PC-9 (cell line): ENCODE measurements at regions of chr5 and their contacts with region 1.

Region 1: GRCh38 chr5:71658916-71659662 is 60.0 kb upstream of the CARTPT start:
- DNase-seq: no peak
- H3K4me3 ChIP-seq: no peak overlapping the region
- H3K27ac ChIP-seq: no peak overlapping the region
- H3K4me1 ChIP-seq: peaks cover 15% of the 10 kb centered on the region; the same call in 1 of the 2 replicates
- H3K27me3 ChIP-seq: no peaks in the 10 kb centered on the region
- CTCF ChIP-seq: peak; percentile 50

Region 2: GRCh38 chr5:71586941-71587765 is 71.9 kb before region 1 on chr5 and contains the start of gene MCCC2:
- CTCF ChIA-PET with region 1: no interaction called
- POLR2A ChIA-PET with region 1: no interaction called
- intact Hi-C with region 1: no loop called
- DNase-seq: peak; percentile 96 to 97
- H3K4me3 ChIP-seq: peak within 1 kb of the TSS; percentile 73
- H3K27ac ChIP-seq: peak within 1 kb of the TSS; percentile 70
- H3K4me1 ChIP-seq: peaks cover 23% of the 10 kb centered on the region
- H3K27me3 ChIP-seq: no peaks in the 10 kb centered on the region
- CTCF ChIP-seq: no peak
- total RNA-seq, gene MCCC2: 77.3 and 87.0 TPM in 2 replicates

Region 3: GRCh38 chr5:71839096-71839884 is 180.2 kb after region 1 on chr5:
- CTCF ChIA-PET with region 1: no interaction called
- POLR2A ChIA-PET with region 1: no interaction called
- intact Hi-C with region 1: no loop called
- DNase-seq: no peak
- H3K4me3 ChIP-seq: no peak overlapping the region
- H3K27ac ChIP-seq: no peak overlapping the region
- H3K4me1 ChIP-seq: no peaks in the 10 kb centered on the region
- H3K27me3 ChIP-seq: no peaks in the 10 kb centered on the region
- CTCF ChIP-seq: no peak

Region 4: DNA sequence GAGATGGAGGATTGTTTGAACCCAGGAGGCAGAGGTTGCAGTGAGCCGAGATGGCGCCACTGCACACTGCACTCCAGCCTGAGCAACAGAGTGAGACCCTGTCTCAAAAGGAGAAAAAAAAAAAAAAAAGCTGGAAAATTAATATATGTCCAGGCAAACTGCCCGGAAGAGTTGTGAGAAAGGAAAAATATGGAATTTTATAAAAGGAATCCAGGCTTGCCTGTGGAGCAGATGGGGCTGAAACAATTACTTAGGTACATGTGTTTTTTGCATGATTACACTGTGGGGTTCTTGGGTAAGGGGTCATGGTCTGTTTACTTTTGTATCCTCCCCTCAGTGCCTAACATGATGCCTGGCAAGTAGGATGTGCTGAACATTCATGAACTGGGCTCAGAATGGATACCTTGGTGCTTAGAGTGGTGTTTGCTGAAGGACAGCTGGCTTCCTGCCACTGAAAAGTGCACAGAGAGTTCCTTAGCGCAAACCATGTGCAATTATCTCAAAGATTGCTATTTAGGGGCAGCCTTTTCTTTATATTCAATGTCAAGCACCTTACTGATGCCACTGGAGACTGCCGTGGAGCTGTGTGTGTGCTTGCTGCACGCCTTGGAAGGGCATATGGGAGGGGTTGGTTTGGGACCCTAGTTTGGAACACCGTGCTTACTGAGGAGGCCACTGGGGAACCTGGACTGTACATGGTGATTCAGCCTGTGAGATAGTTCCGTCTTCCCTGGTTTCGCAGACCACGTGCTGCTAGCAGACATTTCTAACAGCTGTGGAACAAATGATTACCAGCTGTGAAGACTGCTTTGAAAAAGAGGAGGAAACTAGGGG is 526.6 kb after region 1 on chr5:
- CTCF ChIA-PET with region 1: no interaction called
- POLR2A ChIA-PET with region 1: interaction called, 12 read pairs
- intact Hi-C with region 1: no loop called
- DNase-seq: no peak
- H3K4me3 ChIP-seq: no peak overlapping the region
- H3K27ac ChIP-seq: no peak overlapping the region
- H3K4me1 ChIP-seq: no peaks in the 10 kb centered on the region
- H3K27me3 ChIP-seq: no peaks in the 10 kb centered on the region
- CTCF ChIP-seq: no peak